WTC11 (cell line): ENCODE measurements at regions of chr4 and their contacts with region 1.

Region 1: GRCh38 chr4:6427439-6428090 is 44.8 kb downstream of the PPP2R2C start:
- DNase-seq: no peak
- ATAC-seq: peak; percentile 74
- H3K4me3 Mint-ChIP-seq: no peak overlapping the region
- H3K27ac Mint-ChIP-seq: no peak overlapping the region
- H3K4me1 Mint-ChIP-seq: no peaks in the 10 kb centered on the region
- H3K27me3 Mint-ChIP-seq: no peaks in the 10 kb centered on the region
- CTCF ChIP-seq: no peak

Region 2: GRCh38 chr4:6402566-6403398 is 24.8 kb before region 1 on chr4:
- CTCF ChIA-PET with region 1: interaction called, 14 read pairs
- POLR2A ChIA-PET with region 1: no interaction called
- DNase-seq: no peak
- ATAC-seq: peak; percentile 83
- H3K4me3 Mint-ChIP-seq: no peak overlapping the region
- H3K27ac Mint-ChIP-seq: no peak overlapping the region
- H3K4me1 Mint-ChIP-seq: peaks cover 41% of the 10 kb centered on the region
- H3K27me3 Mint-ChIP-seq: no peaks in the 10 kb centered on the region; the same call in 1 of the 2 replicates
- CTCF ChIP-seq: no peak